ENCODE measurements at regions of chr6 and their contacts with region 1.

Region 1: GRCh38 chr6:107033126-107033525 is 5.1 kb downstream of the MTRES1 start:
- DNase-seq: no peak
- H3K4me3 ChIP-seq: no peak overlapping the region
- H3K27ac ChIP-seq: no peak overlapping the region
- H3K4me1 ChIP-seq: no peaks in the 10 kb centered on the region
- H3K27me3 ChIP-seq: no peaks in the 10 kb centered on the region
- CTCF ChIP-seq: no peak
- POLR2A ChIP-seq: no peak

Region 2: DNA sequence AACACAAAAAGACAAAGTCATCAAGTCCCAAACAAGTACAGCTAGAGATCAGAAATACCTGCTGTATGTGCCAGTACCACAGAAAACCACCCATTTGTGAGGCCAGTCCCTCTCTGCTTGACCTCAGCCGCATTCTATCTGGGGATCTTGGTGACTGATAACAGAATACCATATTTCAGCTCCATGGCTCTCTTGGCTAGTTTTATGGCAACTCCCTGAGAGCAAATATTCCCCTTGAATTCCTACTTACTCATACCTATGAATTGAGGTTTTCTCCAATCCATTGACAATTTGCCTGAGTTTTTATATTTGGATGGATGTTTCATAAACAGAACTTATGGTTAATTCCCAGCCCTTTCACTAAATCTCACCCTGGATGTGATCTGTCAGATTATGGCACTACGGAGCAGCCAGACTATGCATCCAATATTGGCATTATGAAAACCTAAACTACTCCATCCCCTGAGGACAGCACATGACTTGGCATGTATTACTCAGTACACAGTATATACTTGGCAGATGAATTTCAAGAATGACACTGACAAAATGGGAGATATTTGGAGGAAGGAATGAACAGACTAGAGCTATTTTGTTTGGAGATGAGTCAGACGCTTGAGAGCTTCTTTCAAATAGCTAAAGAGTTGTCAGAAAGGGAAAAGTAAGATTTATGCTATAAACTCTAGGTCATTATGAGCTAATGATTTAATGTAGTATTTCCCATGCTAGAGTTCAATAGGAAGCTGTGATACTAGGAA is 851.3 kb before region 1 on chr6:
- intact Hi-C with region 1: no loop called
- DNase-seq: no peak
- H3K4me3 ChIP-seq: no peak overlapping the region
- H3K27ac ChIP-seq: no peak overlapping the region
- H3K4me1 ChIP-seq: no peaks in the 10 kb centered on the region
- H3K27me3 ChIP-seq: no peaks in the 10 kb centered on the region
- CTCF ChIP-seq: no peak
- POLR2A ChIP-seq: no peak

Region 3: DNA sequence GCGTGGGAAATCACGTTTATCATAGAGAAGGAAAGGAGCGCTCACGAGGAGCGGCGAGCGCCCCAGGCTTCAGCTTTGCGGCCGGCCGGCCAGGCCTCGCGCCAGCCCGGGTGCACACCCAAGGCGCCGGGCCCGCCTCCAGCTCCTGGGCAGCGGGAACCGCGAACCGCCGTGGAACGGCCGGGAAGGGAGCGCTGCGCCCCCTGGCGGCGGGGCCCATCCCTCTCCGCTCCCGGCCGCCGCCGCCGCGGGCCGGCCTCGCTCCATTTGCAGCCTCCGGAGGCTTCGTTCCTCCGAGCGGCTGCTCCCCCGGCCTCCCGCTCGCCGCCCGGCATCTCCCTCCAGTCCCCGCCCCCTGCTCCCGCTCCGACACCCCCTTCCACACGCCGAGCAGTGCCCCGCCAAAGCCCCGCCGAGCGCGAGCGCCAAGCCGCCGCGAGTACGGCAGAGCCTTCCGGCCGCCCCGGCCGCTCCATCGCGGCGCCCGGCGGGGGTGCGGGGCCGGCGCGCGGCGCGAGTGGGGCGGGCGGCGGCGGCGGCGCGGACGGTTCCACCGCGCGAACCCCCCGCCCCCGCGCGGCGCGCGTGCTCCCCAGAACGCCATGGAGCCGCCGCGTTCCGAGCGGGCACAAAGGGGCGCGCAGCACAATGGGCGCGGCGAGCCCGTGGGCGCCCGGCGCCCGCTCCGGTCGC is 81.2 kb after region 1 on chr6:
- intact Hi-C with region 1: loop called (anchors 1 kb)
- DNase-seq: peak; percentile 81
- H3K4me3 ChIP-seq: peak overlapping the region; percentile 58 to 72
- H3K27ac ChIP-seq: peak overlapping the region; percentile 66 to 73
- H3K4me1 ChIP-seq: no peaks in the 10 kb centered on the region
- H3K27me3 ChIP-seq: no peaks in the 10 kb centered on the region
- CTCF ChIP-seq: peak; percentile 89 to 97 (median 95)
- POLR2A ChIP-seq: no peak